Gastrocnemius medialis (tissue), 4 donors: ENCODE measurements at regions of chr16 and their contacts with region 1.

Region 1: DNA sequence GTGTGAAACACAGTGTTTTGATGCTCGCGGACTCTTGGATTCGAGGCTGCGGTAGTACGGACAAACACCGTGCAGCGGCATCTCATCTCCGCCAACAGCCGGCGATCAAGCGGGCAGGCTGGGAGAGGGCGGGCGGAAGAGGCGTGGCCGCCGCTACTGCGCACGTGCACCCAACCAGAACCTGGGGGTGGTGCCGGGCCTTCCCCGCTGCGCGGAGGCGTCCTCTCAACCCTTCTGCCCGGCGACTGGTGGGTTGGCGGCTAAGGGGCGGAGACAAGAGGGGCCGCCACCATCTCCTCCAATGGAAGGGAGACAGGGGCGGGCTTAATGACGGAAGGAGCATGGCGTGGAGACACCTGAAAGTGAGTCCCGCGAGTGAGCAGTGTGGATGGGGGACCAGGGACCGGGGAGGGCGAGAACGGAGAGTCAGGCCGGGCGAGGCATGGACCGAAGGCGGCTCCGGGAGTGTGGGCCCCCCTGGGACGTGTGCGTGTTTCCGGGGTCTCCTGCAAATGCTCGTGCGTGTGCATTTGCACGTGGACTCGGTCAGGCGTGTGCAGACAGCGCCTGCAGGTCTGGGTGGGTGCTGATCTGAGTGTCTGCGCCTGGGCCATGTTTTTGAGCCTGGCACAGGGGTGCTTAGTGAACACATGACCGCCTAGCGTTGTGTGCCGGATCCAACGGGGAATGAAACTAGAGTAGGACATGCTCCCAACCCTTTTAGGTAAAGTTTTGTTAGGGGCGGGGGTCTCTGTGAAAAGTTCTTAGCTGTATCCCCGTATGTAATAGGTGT is at the start of gene DHODH:
- DNase-seq: peak; percentile 98
- ATAC-seq: peak; percentile 98 to 99
- H3K4me3 ChIP-seq: peak within 1 kb of the TSS; percentile 74 to 96 (median 88)
- H3K27ac ChIP-seq: peak within 1 kb of the TSS; percentile 83 to 91 (median 86)
- H3K4me1 ChIP-seq: peaks cover 11% of the 10 kb centered on the region in 2 donors
- H3K27me3 ChIP-seq: no peaks in the 10 kb centered on the region
- CTCF ChIP-seq: peak in 2 of 5 experiments; percentile 21 to 36
- POLR2A ChIP-seq: peak; percentile 32 to 48
- total RNA-seq, gene DHODH: 5.1 to 7.3 (median 6.7) TPM

Region 2: DNA sequence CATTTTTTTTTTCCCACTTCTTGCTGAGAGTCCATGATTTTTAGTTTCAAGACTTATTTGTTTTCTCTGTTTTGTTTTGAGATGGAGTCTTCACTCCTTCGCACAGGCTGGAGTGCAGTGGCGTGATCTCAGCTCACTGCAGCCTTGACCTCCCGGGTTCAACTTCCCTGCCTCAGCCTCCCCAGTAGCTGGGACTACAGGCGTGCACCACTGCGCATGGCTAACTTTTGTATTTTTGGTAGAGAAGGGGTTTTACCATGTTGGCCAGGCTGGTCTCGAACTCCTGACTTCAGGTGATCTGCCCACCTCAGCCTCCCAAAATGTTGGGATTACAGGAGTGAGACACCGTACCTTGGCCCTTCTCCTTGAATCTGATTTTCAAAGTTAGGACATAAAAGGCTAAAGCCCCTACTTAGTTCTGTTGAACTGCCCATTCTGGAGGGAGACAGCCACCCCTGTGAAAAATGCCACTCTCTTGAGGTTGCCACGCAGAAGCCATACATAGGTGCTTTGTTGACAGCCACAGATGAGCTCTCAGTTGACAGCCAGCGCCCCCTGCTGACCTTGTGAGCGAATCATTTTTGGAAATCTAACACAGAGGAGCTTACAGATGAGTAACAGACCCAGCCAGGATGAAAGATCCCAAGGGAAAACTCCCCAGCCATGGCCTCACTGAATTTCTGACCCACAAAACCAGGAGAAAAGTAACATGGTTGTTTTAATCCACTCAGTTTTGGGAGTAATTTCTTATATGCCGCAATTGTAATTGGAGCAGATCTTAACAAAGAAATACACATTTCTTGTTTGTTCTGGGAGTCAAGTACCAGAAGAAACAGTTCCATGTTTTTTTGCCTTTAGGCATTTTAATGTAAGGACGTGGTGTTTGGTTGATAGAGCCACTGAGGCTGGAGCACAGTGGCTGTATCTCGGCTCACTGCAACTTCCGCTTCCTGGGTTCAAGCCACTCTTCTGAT is 47.3 kb before region 1 on chr16:
- in situ Hi-C with region 1: no loop called
- intact Hi-C with region 1: no loop called
- DNase-seq: peak; percentile 59 to 77
- ATAC-seq: peak; percentile 95 to 99
- H3K4me3 ChIP-seq: no peak overlapping the region
- H3K27ac ChIP-seq: no peak overlapping the region
- H3K4me1 ChIP-seq: no peaks in the 10 kb centered on the region
- H3K27me3 ChIP-seq: no peaks in the 10 kb centered on the region
- CTCF ChIP-seq: peak; percentile 72 to 84 (median 73)
- POLR2A ChIP-seq: no peak

Region 3: DNA sequence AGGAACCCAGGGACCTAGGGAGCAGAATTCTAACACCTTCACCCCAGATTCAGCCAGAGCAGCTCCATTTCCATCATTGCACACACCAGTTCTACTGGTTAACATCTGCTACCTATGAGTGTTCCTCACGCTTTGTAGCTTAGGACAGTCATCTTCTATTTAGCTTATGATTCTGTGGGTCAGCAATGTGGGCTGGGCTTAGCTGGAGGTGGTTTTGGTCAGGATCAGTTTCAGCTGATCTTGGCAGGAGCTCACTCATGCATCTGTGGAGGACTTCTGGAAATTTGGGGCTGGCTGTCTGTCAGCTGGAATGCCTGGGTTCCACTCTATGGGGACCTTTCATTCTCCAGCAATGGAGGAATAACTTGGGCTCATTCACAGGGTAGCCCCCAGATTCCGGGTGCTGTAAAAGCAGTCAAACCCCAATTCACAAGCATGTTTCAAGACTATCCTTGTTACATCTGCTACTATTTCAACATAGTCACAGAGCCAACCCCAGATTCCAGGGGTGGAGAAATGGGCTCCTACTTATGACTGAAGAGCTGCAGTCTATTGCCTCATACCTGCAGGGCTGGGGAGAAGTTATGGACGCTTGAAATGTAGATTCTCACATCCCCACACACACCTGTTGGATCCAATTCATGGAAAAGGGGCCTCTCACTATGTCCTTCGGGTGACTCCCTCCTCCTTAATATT is 42.3 kb after region 1 on chr16:
- in situ Hi-C with region 1: no loop called
- intact Hi-C with region 1: loop called (anchors 1 kb)
- DNase-seq: peak; percentile 78 to 87
- ATAC-seq: peak; percentile 97 to 99
- H3K4me3 ChIP-seq: no peak overlapping the region
- H3K27ac ChIP-seq: peak overlapping the region; percentile 65 to 79 (median 72)
- H3K4me1 ChIP-seq: peaks cover 14 to 27% of the 10 kb centered on the region in 2 donors
- H3K27me3 ChIP-seq: no peaks in the 10 kb centered on the region
- CTCF ChIP-seq: no peak
- POLR2A ChIP-seq: peak; percentile 18 to 54

Region 4: DNA sequence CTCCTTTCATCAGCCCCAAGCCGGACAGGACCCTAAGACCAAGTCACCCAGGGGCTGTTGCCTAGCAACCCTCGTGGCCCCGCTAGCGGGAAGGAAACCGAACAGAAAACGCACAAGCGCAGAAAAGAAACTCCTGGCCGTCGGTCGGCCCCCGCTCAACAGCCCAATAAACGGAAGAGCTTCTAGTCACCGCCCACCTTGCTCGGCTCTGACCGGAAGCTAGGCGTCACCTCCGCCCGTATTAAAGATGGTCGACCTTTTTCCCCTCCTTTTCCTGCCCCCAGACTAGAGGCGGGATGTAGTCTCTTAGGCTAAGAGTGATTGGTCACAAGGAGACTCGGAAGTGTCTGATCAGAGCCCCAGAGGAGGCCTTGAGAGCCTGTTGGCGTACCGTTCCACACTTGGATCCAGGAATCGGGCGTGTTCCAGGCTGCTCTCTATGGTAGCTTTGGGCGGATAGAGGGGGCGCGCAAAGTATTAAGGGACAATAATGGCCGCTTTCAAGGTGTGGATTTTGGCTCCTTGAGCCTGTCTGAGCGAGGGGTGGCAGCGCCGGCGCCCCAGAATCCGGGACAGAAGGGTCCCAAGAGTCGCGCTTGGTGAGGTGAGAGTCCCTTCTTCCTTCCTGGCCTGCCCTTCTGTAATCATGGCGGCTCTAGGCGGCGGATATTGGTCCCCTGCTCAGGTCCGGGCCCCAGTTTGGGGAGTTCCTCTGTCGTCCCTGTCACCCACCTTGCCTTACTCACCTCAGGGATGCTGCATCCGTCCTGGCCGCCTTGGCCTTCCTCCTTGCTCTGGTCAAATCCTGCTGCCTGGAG is 85.0 kb after region 1 on chr16 and contains the starts of genes DHX38 and TXNL4B:
- in situ Hi-C with region 1: loop called in 3 of 4 experiments (anchors 10 kb)
- intact Hi-C with region 1: loop called (anchors 1 kb)
- DNase-seq: peak; percentile 94 to 95
- ATAC-seq: peak; percentile 99 to 100
- H3K4me3 ChIP-seq: peak within 1 kb of the TSS; percentile 89 to 95 (median 92)
- H3K27ac ChIP-seq: peak within 1 kb of the TSS; percentile 87 to 96 (median 92)
- H3K4me1 ChIP-seq: peaks cover 29 to 32% of the 10 kb centered on the region in 2 donors
- H3K27me3 ChIP-seq: no peaks in the 10 kb centered on the region
- CTCF ChIP-seq: no peak
- POLR2A ChIP-seq: peak; percentile 87 to 93
- total RNA-seq, gene DHX38: 26.9 to 75.3 (median 53.8) TPM
- total RNA-seq, gene TXNL4B: 6.0 to 13.7 (median 10.0) TPM